Aorta (tissue), 5 donors: ENCODE measurements at regions of chr3 and their contacts with region 1.

Region 1: GRCh38 chr3:27533718-27534573 is 49.8 kb upstream of the SLC4A7 start:
- DNase-seq: peak; percentile 91
- ATAC-seq: peak; percentile 89
- H3K4me3 ChIP-seq: no peak overlapping the region
- H3K27ac ChIP-seq: peak overlapping the region in 1 of 2 donors; percentile 93
- H3K4me1 ChIP-seq: peaks cover 0 to 3% of the 10 kb centered on the region in 2 donors
- H3K27me3 ChIP-seq: no peaks in the 10 kb centered on the region

Region 2: DNA sequence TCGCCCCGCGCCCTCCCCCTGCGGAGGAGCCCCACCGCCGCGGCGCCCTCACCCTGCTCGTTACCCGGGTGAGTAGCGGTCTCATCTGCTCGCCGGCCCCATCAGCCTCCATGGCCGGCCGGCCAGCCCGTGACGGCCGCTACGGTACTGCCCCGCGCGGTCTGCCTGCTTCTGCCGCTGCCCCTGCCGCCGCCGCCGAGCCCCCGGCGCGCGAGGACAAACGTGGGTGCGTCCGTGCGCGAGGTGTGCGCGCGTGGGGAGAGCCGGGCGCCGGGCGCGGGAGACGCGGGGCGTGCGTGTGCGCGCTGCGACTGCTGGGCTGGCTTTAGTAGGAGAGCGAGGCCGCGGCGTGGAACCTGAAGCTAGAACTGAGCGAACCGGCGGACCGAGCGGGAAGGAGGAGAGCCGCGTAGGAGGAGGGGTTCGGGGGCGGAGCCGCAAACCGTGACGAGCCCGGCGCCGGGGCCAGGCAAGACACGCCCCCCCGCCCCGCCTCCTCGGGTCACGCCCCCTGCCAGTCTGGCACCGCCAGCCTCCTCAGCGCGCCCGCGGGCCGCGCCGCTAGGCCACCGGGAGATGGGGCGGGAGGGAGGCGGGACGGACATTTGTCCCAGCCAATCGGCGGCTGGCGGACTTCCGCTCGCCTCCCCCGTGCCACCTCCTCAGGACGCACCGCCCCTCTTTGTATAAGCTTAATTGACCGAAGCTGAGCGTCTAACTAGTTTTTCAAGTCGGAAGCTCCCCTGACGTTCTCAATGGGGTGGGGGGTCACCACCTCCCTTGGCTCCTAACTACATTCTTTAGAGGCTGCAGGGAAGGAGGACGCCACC is 49.7 kb before region 1 on chr3 and contains the start of gene SLC4A7:
- intact Hi-C with region 1: loop called in 1 of 2 experiments (anchors 10 kb)
- DNase-seq: peak; percentile 99 to 100
- ATAC-seq: peak; percentile 99
- H3K4me3 ChIP-seq: peak within 1 kb of the TSS; percentile 84 to 96
- H3K27ac ChIP-seq: peak within 1 kb of the TSS; percentile 71 to 91
- H3K4me1 ChIP-seq: no peaks in the 10 kb centered on the region
- H3K27me3 ChIP-seq: no peaks in the 10 kb centered on the region
- total RNA-seq, gene SLC4A7: 61.0 to 62.8 TPM

Region 3: DNA sequence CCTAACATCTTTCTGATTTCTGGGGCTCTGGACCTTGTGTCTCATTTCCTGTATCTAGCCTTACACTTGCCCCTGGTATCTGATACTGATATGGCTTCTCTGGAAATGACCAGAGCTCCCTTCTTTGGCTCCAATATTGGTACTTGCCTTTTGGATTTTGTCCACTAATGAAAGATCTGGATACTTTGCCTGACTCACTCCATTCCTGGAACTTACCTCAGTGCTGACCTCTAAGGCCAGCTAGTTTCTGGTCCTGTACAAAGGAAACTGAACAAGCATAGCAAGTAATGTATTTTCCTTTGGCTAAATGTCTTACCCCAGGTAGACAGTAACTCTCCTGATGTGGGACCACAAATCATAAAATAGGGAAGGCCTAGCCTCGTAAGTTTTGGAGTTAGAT is 44.1 kb after region 1 on chr3:
- intact Hi-C with region 1: loop called in 1 of 2 experiments (anchors 5 kb)
- DNase-seq: no peak
- ATAC-seq: peak; percentile 39
- H3K4me3 ChIP-seq: no peak overlapping the region
- H3K27ac ChIP-seq: peak overlapping the region; percentile 68 to 77
- H3K4me1 ChIP-seq: peaks cover 0 to 2% of the 10 kb centered on the region in 2 donors
- H3K27me3 ChIP-seq: no peaks in the 10 kb centered on the region

Region 4: GRCh38 chr3:27623085-27623753 is 89.3 kb after region 1 on chr3:
- intact Hi-C with region 1: no loop called
- DNase-seq: peak in 1 of 2 donors; percentile 62
- ATAC-seq: peak; percentile 62
- H3K4me3 ChIP-seq: no peak overlapping the region
- H3K27ac ChIP-seq: peak overlapping the region; percentile 55 to 98
- H3K4me1 ChIP-seq: peaks cover 0 to 6% of the 10 kb centered on the region in 2 donors
- H3K27me3 ChIP-seq: no peaks in the 10 kb centered on the region

Region 5: GRCh38 chr3:27639271-27639670 is 105.3 kb after region 1 on chr3:
- intact Hi-C with region 1: loop called in 1 of 2 experiments (anchors 5 kb)
- DNase-seq: no peak
- ATAC-seq: no peak
- H3K4me3 ChIP-seq: no peak overlapping the region
- H3K27ac ChIP-seq: no peak overlapping the region
- H3K4me1 ChIP-seq: peaks cover 0 to 4% of the 10 kb centered on the region in 2 donors
- H3K27me3 ChIP-seq: no peaks in the 10 kb centered on the region

Region 6: GRCh38 chr3:27655547-27655946 is 121.6 kb after region 1 on chr3:
- intact Hi-C with region 1: no loop called
- DNase-seq: no peak
- ATAC-seq: no peak
- H3K4me3 ChIP-seq: no peak overlapping the region
- H3K27ac ChIP-seq: no peak overlapping the region
- H3K4me1 ChIP-seq: no peaks in the 10 kb centered on the region
- H3K27me3 ChIP-seq: no peaks in the 10 kb centered on the region